ENCODE measurements at regions of chr5 and their contacts with region 1.

Region 1: DNA sequence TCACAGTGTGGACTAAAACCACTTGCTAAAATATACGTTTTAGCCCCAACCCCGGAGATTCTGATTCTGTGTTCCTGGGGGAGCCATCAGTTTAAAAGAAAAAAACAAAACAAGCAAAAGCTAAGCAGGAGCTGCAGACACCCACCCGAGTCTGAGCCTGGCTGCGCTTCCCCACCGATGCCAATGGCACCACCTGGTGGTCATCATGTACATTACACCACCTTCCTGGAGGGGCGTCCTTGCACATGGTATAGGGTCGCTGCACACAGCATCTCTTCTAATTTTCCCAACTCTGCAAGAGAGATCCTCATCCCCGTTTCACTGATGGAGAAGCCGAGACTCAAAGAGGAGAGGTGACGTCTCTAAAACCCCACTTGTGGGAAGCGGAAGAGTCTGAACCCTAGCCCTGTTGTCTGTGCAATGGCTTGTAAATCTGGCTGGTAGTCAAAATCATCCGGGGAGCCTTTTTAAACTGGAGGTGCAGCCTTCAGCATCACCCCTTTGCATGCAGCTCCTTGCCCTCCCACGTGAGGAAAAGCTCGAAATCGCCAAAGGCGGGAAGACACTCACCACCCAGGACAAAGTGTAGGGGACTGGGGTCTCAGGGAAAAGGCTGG is 23.1 kb upstream of the CNOT6 start:
- DNase-seq: no peak
- H3K4me3 ChIP-seq: no peak overlapping the region
- CTCF ChIP-seq: peak; percentile 92

Region 2: GRCh38 chr5:180126726-180127681 is 344.1 kb before region 1 on chr5:
- CTCF ChIA-PET with region 1: interaction called, 12 read pairs
- POLR2A ChIA-PET with region 1: no interaction called
- DNase-seq: no peak
- H3K4me3 ChIP-seq: no peak overlapping the region
- CTCF ChIP-seq: peak; percentile 86

Region 3: GRCh38 chr5:180484813-180485212 is 13.7 kb after region 1 on chr5:
- CTCF ChIA-PET with region 1: interaction called, 16 read pairs
- POLR2A ChIA-PET with region 1: no interaction called
- DNase-seq: no peak
- H3K4me3 ChIP-seq: no peak overlapping the region
- CTCF ChIP-seq: no peak

Measured in AG04449 (cell line).